ENCODE measurements at regions of chr16 and their contacts with region 1.

Region 1: DNA sequence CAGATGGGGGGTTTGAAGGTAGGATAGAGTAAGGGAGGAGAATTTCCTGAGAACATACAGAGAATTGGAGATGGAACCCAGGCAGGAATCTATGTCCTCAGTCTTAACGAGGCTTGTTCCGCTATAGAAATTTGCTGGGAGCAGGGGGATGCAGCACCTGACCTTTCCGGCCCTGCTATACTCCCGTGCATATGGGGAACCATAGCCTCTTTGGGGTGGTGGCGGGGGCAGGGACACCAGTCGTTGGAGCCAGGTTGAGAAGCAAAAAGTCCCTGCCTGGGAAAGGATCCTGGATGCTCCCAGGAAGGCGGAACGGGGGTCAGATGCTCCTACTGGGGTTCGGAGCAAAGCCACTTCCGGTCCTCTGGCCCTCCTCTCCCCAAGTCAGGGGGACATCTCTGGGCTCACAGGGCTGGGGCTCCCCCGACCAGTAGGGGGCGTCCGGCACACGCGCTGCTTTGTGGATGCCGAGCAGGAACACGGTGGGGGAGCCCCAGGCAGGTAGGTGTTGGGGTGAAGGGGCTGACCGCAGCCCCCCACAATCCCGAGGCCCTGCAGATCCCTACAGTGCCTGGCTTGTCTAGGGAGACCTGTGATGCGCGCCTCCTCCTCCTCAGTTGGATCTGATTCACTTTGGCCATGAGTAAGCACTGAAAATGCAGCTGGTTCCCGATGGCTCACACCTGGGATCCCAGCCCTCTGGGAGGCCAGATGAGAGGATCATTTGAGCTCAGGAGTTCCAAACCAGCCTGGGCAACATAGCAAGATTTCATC is 15.5 kb upstream of the TFAP4 start:
- DNase-seq: peak; percentile 84
- ATAC-seq: peak; percentile 98
- H3K4me3 Mint-ChIP-seq: no peak overlapping the region
- H3K27ac Mint-ChIP-seq: no peak overlapping the region
- H3K4me1 Mint-ChIP-seq: peaks cover 9% of the 10 kb centered on the region
- H3K27me3 Mint-ChIP-seq: peaks cover 5% of the 10 kb centered on the region

Region 2: DNA sequence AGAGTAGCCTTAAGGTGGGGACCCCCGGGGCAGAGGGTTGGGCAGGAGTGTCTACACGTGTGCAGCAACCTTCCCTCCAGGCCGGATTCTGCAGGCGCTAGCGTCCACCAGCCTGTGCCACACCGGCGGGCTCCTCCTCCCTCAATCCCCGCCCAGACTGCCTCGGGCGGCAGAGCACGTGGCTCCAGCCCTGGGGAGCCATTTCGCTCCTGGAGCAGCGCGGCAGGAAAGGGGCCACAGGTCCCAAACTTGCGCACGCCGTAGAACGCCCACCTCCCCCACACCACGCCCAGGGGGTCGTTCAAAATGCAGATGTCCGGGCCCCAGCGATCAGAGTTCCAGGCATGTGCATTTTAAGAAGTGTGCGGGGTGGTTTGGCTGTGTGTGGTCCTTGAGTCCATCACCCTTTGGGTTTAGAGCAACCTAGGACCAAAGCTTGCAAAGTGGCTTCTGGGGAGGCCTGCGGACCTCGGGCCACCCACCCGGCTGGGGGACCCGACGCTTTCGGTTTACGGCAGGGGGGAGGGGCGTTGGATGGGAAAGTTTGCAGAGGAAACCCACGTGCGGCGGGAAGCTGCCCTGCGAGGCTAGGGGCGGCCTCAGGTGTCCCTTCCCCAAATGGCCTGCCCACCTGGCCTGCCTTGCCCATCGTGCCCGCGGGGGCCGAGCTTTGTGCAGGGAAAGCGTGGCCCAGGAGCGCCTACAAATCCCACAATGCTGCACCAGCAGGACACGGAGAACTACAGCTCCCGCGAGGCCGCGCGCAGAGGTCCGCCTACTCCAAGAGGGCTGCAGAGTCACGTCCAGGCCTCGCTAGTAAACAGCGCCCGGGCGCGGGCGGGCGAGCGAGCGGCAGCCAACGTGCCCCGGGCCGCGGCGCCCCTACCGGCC is 16.9 kb before region 1 on chr16:
- CTCF ChIA-PET with region 1: interaction called, 16 read pairs
- DNase-seq: peak; percentile 95
- ATAC-seq: peak; percentile 86
- H3K4me3 Mint-ChIP-seq: peak overlapping the region; percentile 85
- H3K27ac Mint-ChIP-seq: peak overlapping the region; percentile 93
- H3K4me1 Mint-ChIP-seq: peaks cover 21% of the 10 kb centered on the region
- H3K27me3 Mint-ChIP-seq: no peaks in the 10 kb centered on the region

Region 3: GRCh38 chr16:4298761-4299522 is 10.6 kb after region 1 on chr16:
- CTCF ChIA-PET with region 1: interaction called, 13 read pairs
- DNase-seq: no peak
- ATAC-seq: no peak
- H3K4me3 Mint-ChIP-seq: no peak overlapping the region
- H3K27ac Mint-ChIP-seq: no peak overlapping the region
- H3K4me1 Mint-ChIP-seq: no peaks in the 10 kb centered on the region
- H3K27me3 Mint-ChIP-seq: no peaks in the 10 kb centered on the region

Region 4: GRCh38 chr16:4307215-4308037 is 19.1 kb after region 1 on chr16:
- CTCF ChIA-PET with region 1: interaction called, 18 read pairs
- DNase-seq: peak; percentile 98
- ATAC-seq: peak; percentile 94
- H3K4me3 Mint-ChIP-seq: peak overlapping the region; percentile 96
- H3K27ac Mint-ChIP-seq: peak overlapping the region; percentile 97
- H3K4me1 Mint-ChIP-seq: peaks cover 22% of the 10 kb centered on the region
- H3K27me3 Mint-ChIP-seq: no peaks in the 10 kb centered on the region

Region 5: GRCh38 chr16:4330277-4330874 is 42.0 kb after region 1 on chr16:
- CTCF ChIA-PET with region 1: interaction called, 101 read pairs
- DNase-seq: peak; percentile 82
- ATAC-seq: peak; percentile 82
- H3K4me3 Mint-ChIP-seq: no peak overlapping the region
- H3K27ac Mint-ChIP-seq: no peak overlapping the region
- H3K4me1 Mint-ChIP-seq: peaks cover 3% of the 10 kb centered on the region
- H3K27me3 Mint-ChIP-seq: peaks cover 10% of the 10 kb centered on the region

Region 6: GRCh38 chr16:4358831-4359561 is 70.7 kb after region 1 on chr16:
- CTCF ChIA-PET with region 1: no interaction called
- DNase-seq: peak; percentile 74
- ATAC-seq: peak; percentile 78
- H3K4me3 Mint-ChIP-seq: no peak overlapping the region
- H3K27ac Mint-ChIP-seq: no peak overlapping the region
- H3K4me1 Mint-ChIP-seq: no peaks in the 10 kb centered on the region
- H3K27me3 Mint-ChIP-seq: no peaks in the 10 kb centered on the region

Measured in activated CD8-positive, alpha-beta memory T cell treated with anti-CD3 and anti-CD28 coated beads, Interleukin-2, amount 10 ng/mL, durations not matched to agents 7 days and 5 days (primary cell).